ENCODE measurements at regions of chr19 and their contacts with region 1.

Region 1: DNA sequence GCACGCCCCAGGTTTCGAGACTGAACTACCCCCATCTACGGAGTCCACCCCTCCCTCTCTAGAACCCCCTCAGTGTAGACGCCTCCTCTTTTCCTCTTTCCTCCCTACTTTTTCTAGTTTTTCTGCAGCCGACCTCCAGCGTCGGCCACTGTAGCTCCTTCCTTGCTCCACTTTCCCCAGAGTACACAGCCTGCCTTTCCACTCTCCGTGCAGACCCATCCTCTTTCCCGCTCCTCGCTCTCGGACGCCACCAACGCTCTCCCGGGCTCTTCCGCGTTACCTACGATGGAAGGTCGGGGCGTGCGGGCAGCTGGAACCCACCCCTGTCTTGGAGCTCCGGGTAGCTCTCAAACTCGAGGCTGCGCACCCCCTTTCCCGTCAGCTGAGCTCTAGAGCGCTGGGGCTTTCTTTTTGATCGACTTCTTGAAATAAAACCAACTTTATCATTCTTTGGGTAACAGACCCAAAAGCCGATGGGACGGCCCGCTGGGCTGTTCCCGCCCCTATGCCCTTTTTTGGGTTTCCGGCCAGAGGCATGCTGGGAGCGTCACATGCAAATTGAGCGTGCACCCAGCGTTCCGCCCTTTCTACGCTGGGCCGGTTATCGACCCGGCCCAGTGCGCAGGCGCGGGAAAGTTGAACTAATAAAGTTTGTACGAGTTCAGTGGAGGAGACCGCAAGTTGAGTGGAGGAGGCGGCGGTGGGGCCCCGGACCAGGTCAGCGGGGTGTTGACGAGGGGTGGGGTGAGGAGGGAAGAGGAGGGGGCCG is at the starts of genes BCL2L12 and IRF3:
- DNase-seq: peak; percentile 98 to 99 (median 98)
- ATAC-seq: peak; percentile 91 to 96 (median 92)
- H3K4me3 ChIP-seq: peak within 1 kb of the TSS; percentile 61 to 93 (median 76)
- H3K27ac ChIP-seq: peak within 1 kb of the TSS; percentile 63 to 95 (median 87)
- H3K4me1 ChIP-seq: peaks cover 0 to 33% (median 17%) of the 10 kb centered on the region in 12 donors
- H3K27me3 ChIP-seq: no peaks in the 10 kb centered on the region
- CTCF ChIP-seq: no peak
- POLR2A ChIP-seq: peak in 1 of 2 donors; percentile 76
- total RNA-seq, gene BCL2L12: 5.9 to 15.9 (median 10.0) TPM
- total RNA-seq, gene IRF3: 23.1 to 55.7 (median 30.5) TPM

Region 2: DNA sequence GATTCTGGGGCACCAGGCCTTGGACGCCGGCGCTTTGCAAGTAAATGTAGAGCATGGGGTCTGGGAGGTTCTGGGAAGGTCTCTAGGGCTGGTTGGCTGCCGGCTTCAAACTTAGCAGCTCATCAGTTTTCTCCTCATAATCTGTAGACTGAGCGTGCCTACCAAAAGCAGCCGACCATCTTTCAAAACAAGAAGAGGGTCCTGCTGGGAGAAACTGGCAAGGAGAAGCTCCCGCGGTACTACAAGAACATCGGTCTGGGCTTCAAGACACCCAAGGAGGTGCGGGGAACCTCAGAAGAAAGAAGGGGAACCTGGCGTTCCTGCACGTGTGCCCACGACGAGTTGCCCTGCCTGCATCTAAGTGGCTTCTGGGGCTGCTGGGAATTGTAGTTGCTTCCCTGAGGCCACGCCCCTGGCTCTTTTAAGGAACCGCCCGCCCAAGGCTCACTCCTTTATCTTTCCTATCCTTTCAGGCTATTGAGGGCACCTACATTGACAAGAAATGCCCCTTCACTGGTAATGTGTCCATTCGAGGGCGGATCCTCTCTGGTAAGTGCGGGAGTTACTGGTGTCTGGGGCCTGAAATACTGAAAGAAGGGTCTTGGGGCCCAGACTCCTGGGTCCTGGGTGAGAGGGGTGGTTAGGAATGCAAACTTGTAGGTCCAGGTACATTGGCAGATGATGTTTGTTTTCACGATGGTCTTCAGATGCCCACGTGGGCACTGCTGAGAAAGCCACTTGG is 168.3 kb before region 1 on chr19:
- intact Hi-C with region 1: loop called in 1 of 10 experiments (anchors 5 kb)
- DNase-seq: peak in 4 of 5 donors; percentile 63 to 76 (median 67)
- ATAC-seq: no peak
- H3K4me3 ChIP-seq: peak overlapping the region; percentile 80 to 98 (median 90)
- H3K27ac ChIP-seq: peak overlapping the region in 11 of 12 donors; percentile 89 to 99 (median 96)
- H3K4me1 ChIP-seq: peaks cover 14 to 56% (median 41%) of the 10 kb centered on the region in 12 donors
- H3K27me3 ChIP-seq: no peaks in the 10 kb centered on the region
- CTCF ChIP-seq: no peak
- POLR2A ChIP-seq: no peak

Region 3: GRCh38 chr19:49590071-49590970 is 75.2 kb before region 1 on chr19:
- intact Hi-C with region 1: loop called in 3 of 10 experiments (anchors 2 to 10 kb)
- DNase-seq: peak; percentile 93 to 97 (median 97)
- ATAC-seq: peak; percentile 86 to 91 (median 89)
- H3K4me3 ChIP-seq: peak overlapping the region; percentile 68 to 96 (median 80)
- H3K27ac ChIP-seq: peak overlapping the region; percentile 82 to 99 (median 94)
- H3K4me1 ChIP-seq: peaks cover 5 to 35% (median 20%) of the 10 kb centered on the region in 12 donors
- H3K27me3 ChIP-seq: no peaks in the 10 kb centered on the region
- CTCF ChIP-seq: peak in 1 of 12 donors; percentile 10
- POLR2A ChIP-seq: peak in 1 of 2 donors; percentile 73

Region 4: DNA sequence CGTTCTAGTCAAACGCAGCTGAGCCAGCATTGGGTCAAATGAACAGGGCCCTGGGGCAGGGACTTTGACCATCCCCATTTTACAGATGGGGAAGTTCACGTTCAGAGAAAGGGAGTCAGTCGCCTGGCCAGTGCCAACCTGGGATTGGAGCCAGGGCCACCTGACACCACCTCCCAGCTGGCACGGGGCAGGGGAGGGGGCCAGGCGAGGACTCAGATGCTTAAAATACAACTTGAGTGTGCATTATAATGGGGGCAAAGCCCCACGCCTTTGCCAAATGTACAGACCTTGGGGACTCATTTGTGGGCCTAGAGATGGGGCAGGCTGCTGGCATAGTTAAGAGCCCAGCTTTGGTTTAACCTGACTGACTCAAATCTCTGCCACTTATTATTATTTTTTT is 59.9 kb before region 1 on chr19:
- intact Hi-C with region 1: no loop called
- DNase-seq: no peak
- ATAC-seq: no peak
- H3K4me3 ChIP-seq: no peak overlapping the region
- H3K27ac ChIP-seq: no peak overlapping the region
- H3K4me1 ChIP-seq: peaks cover 0 to 6% (median 0%) of the 10 kb centered on the region in 12 donors
- H3K27me3 ChIP-seq: no peaks in the 10 kb centered on the region
- CTCF ChIP-seq: no peak
- POLR2A ChIP-seq: no peak

Measured in heart left ventricle (tissue), 16 donors.